CD8-positive, alpha-beta memory T cell (primary cell): ENCODE measurements at regions of chr17 and their contacts with region 1.

Region 1: GRCh38 chr17:74770498-74771318 is 5.4 kb downstream of the NAT9 start:
- DNase-seq: peak; percentile 65 to 86 (median 73)
- H3K4me3 ChIP-seq: no peak overlapping the region
- H3K4me3 Mint-ChIP-seq: peak overlapping the region in 2 of 7 donors; percentile 36 to 83
- H3K27ac ChIP-seq: no peak overlapping the region
- H3K27ac Mint-ChIP-seq: peak overlapping the region; percentile 65 to 99 (median 82)
- H3K4me1 ChIP-seq: peaks cover 27% of the 10 kb centered on the region
- H3K4me1 Mint-ChIP-seq: peaks cover 38 to 61% (median 54%) of the 10 kb centered on the region in 3 donors
- H3K27me3 ChIP-seq: no peaks in the 10 kb centered on the region
- H3K27me3 Mint-ChIP-seq: peaks cover 0 to 2% of the 10 kb centered on the region in 2 donors

Region 2: GRCh38 chr17:74742153-74742515 is 28.6 kb before region 1 on chr17:
- CTCF ChIA-PET with region 1: interaction called, 99 read pairs
- POLR2A ChIA-PET with region 1: interaction called, 7 read pairs
- DNase-seq: peak; percentile 33 to 70 (median 48)
- H3K4me3 ChIP-seq: peak overlapping the region; percentile 31
- H3K4me3 Mint-ChIP-seq: peak overlapping the region; percentile 71 to 93 (median 82)
- H3K27ac ChIP-seq: no peak overlapping the region
- H3K27ac Mint-ChIP-seq: peak overlapping the region; percentile 73 to 96 (median 92)
- H3K4me1 ChIP-seq: peaks cover 95% of the 10 kb centered on the region
- H3K4me1 Mint-ChIP-seq: peaks cover 84 to 90% (median 84%) of the 10 kb centered on the region in 3 donors
- H3K27me3 ChIP-seq: no peaks in the 10 kb centered on the region
- H3K27me3 Mint-ChIP-seq: no peaks in the 10 kb centered on the region

Region 3: GRCh38 chr17:75271233-75271954 is 500.7 kb after region 1 on chr17:
- CTCF ChIA-PET with region 1: no interaction called
- POLR2A ChIA-PET with region 1: no interaction called
- DNase-seq: peak; percentile 83 to 92 (median 90)
- H3K4me3 ChIP-seq: peak overlapping the region; percentile 72
- H3K4me3 Mint-ChIP-seq: peak overlapping the region; percentile 77 to 92 (median 83)
- H3K27ac ChIP-seq: peak overlapping the region; percentile 89
- H3K27ac Mint-ChIP-seq: peak overlapping the region; percentile 72 to 94 (median 90)
- H3K4me1 ChIP-seq: peaks cover 19% of the 10 kb centered on the region
- H3K4me1 Mint-ChIP-seq: peaks cover 20 to 35% (median 23%) of the 10 kb centered on the region in 3 donors
- H3K27me3 ChIP-seq: no peaks in the 10 kb centered on the region
- H3K27me3 Mint-ChIP-seq: peaks cover 0 to 1% of the 10 kb centered on the region in 2 donors